ENCODE measurements at regions of chr5 and their contacts with region 1.

Region 1: DNA sequence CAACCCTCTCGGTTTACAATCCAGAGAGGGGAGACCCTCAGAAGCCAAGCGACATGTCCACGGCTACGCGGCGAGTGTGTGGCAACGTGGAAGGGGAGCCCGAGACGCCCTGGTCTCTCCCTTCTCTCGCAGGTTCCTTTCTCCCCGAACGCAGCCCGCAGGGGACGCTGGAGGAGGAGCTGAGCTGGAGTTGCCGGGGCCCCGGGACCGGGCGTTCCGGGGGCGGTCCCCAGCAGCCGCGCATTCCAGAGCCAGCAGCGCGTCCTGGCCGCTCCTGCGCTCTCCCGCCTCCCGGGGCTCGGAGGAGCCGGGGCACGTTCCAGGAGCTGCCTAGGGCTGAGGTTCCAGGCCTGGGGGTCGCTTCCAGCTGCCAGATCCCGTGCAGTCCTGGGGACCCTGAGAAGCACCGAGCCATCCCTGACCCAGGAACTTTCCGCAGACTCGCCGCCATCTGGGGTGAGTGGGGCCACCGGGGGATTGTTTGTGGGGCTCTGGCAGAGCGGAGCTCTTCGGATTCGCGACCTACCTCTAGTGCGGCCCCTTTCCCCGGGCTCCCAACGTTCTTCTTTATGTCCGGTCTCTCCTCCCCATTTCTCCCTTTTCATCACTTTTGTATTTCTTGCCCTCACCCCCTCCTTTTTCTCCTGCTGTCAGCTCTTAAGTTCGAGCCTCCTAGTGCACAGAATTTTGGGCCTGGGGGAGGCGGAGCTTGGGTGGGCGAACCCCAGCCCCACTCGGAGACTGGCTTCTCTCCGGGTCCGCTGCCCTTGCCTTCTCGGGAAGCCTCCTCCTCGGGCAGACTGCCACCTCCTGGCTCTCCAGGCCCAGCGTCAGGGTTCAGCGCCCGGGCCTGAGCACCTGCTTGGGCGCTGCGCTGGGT is at the start of gene SMIM3:
- DNase-seq: peak; percentile 53
- H3K4me3 Mint-ChIP-seq: peak within 1 kb of the TSS; percentile 100
- H3K27ac Mint-ChIP-seq: peak within 1 kb of the TSS; percentile 83
- H3K4me1 Mint-ChIP-seq: peaks cover 62% of the 10 kb centered on the region
- H3K27me3 Mint-ChIP-seq: peaks cover 2% of the 10 kb centered on the region
- total RNA-seq, gene SMIM3: 12.8 and 13.4 TPM in 2 replicates

Region 2: DNA sequence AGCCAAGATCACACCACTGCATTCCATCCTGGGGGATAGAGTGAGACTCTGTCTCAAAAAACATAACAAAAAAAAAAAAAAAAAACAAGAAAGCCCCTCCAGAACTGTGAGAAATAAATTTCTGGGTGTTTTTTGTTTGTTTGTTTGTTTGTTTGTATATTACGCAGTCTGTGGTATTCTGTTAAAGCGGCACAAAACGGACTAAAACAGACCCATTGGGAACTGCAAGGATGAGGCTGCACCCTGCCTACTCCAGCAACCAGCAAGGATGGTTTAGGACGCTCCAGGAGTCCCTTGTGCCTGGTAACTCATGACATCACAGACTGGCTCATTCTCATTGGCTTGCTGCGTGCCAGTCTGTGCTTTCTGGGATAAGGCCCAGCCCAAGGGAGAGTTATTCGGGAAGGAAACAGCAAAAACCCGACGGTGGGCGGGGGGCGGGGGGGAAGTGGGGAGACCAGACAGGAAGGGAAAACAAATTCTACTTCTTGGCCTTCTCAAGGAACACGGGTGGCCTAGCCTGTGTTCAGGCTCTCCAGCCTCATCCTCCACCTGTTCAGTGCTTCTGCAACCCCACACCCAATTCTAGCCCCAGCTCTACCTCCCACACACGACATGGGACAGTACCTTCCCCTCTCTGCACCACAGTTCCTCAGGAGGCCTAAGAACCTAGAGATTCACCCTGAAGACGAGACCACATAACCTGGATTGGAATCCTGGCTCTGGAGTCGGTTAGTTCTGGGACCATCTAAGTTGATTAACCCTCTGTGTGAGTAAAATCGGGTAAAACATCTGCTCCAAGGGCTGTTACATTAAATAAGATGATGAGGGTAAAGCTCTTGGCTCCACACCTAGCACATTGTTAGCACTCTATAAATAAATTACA is 368.9 kb before region 1 on chr5:
- intact Hi-C with region 1: loop called (anchors 5 kb)
- DNase-seq: peak; percentile 38
- H3K4me3 Mint-ChIP-seq: peak overlapping the region; percentile 91
- H3K27ac Mint-ChIP-seq: peak overlapping the region; percentile 98
- H3K4me1 Mint-ChIP-seq: peaks cover 45% of the 10 kb centered on the region
- H3K27me3 Mint-ChIP-seq: no peaks in the 10 kb centered on the region

Region 3: DNA sequence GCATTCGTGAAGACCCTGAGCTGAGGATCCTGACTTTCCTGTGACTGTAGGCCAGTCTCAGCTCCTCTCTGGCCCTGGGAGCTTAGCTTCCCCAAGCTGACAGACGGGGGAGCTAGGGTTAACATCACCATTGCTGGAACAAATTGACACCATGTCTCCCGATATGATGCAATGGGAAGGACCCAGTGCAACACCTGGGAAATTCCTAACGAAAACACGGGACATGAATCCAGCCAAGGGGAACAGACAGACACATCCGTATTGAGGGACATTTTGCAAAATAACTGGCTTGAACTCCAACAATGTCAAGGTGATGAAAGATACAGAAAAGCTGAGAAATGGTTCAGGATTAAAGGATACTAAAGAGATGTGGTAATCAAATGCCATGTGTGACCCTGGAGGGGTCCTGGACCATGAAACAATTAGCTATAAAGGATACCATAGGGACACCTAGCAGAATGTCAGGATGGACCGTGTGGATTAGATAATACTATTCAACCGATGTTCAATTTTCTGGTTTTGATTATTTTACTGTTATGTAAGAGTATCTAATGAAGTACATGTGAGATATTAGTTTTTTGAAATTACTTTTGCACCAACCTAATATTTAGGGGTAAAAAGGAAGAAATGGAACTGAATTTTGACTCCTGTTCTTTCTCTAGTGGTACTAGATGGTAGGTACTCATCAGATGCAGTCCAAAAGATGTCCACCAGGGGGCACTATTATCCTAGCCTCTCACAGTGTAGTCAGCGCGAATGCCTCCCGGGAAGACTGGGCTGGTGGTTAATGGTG is 218.2 kb before region 1 on chr5:
- intact Hi-C with region 1: loop called (anchors 2 kb)
- DNase-seq: peak; percentile 71
- H3K4me3 Mint-ChIP-seq: no peak overlapping the region
- H3K27ac Mint-ChIP-seq: no peak overlapping the region
- H3K4me1 Mint-ChIP-seq: no peaks in the 10 kb centered on the region
- H3K27me3 Mint-ChIP-seq: peaks cover 7% of the 10 kb centered on the region

Region 4: DNA sequence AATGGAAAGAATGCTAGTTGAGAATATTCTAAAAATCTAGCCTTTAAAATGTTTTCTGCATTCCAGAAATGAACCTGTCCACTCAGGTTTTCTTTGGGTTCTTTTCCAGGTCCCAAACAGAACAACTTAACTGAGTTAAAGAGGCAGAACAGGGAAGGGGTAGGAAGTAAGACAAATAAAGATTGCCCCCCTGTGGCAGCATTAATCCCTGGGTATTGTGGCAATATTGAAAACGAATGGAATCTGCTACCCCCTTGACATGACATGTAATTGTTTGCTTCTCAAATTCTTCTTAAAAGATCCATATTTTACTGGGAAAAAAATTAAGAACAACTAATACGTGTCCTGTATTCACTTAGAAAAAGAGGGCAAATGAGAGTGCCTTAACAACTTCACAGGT is 68.6 kb before region 1 on chr5:
- intact Hi-C with region 1: no loop called
- DNase-seq: no peak
- H3K4me3 Mint-ChIP-seq: no peak overlapping the region
- H3K27ac Mint-ChIP-seq: no peak overlapping the region
- H3K4me1 Mint-ChIP-seq: no peaks in the 10 kb centered on the region
- H3K27me3 Mint-ChIP-seq: no peaks in the 10 kb centered on the region

Region 5: GRCh38 chr5:150738862-150739261 is 39.9 kb before region 1 on chr5:
- intact Hi-C with region 1: loop called (anchors 2 kb)
- DNase-seq: no peak
- H3K4me3 Mint-ChIP-seq: no peak overlapping the region
- H3K27ac Mint-ChIP-seq: no peak overlapping the region
- H3K4me1 Mint-ChIP-seq: peaks cover 85% of the 10 kb centered on the region
- H3K27me3 Mint-ChIP-seq: no peaks in the 10 kb centered on the region

Region 6: DNA sequence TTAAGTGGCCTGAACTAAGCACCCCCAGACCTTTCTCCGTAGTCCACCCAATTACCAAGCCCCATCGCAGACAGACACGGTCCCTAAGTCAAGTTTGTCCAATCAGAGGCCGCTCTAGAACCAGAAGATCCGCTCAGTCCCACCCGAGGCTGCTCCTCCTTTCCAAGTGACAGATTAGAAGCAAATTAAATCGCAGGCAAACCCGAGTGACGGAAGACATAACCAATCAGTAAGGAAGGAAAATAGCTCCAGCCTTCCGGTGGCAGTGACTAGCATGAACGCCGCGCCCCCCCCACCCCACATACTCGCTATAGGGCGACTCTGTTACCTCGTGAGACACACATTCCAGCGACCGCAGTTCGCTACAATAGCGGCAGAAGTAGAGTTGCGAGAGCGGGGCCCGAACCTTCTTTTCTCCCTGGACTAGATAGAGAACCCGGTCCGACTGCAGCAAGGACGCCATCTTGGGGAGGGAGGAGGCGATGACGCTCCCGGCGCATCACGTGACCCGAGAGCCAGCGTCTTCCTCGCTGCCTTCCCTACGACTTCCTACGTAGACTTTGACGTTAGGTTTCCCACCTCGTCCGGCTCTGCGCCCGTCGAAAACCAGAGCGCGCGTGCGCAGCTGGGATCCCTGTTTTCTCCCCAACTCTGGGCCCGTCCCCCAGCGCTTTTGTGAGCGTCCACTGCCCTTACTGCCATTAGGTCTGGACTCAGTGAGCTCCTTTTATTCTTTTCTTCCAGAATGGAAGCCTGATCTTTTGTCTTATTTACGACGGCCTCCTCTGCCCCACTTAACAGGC is 20.0 kb before region 1 on chr5 and contains the start of gene DCTN4:
- intact Hi-C with region 1: loop called (anchors 1 kb)
- DNase-seq: peak; percentile 90
- H3K4me3 Mint-ChIP-seq: no peak within 1 kb of the TSS
- H3K27ac Mint-ChIP-seq: no peak within 1 kb of the TSS
- H3K4me1 Mint-ChIP-seq: peaks cover 34% of the 10 kb centered on the region
- H3K27me3 Mint-ChIP-seq: peaks cover 2% of the 10 kb centered on the region
- total RNA-seq, gene DCTN4: 42.3 and 46.4 TPM in 2 replicates

Region 7: GRCh38 chr5:150789943-150790611 is 11.3 kb after region 1 on chr5:
- intact Hi-C with region 1: loop called (anchors 1 kb)
- DNase-seq: peak; percentile 63
- H3K4me3 Mint-ChIP-seq: peak overlapping the region; percentile 78
- H3K27ac Mint-ChIP-seq: peak overlapping the region; percentile 87
- H3K4me1 Mint-ChIP-seq: peaks cover 59% of the 10 kb centered on the region
- H3K27me3 Mint-ChIP-seq: no peaks in the 10 kb centered on the region